Heart left ventricle (tissue), 16 donors: ENCODE measurements at regions of chr4 and their contacts with region 1.

Region 1: DNA sequence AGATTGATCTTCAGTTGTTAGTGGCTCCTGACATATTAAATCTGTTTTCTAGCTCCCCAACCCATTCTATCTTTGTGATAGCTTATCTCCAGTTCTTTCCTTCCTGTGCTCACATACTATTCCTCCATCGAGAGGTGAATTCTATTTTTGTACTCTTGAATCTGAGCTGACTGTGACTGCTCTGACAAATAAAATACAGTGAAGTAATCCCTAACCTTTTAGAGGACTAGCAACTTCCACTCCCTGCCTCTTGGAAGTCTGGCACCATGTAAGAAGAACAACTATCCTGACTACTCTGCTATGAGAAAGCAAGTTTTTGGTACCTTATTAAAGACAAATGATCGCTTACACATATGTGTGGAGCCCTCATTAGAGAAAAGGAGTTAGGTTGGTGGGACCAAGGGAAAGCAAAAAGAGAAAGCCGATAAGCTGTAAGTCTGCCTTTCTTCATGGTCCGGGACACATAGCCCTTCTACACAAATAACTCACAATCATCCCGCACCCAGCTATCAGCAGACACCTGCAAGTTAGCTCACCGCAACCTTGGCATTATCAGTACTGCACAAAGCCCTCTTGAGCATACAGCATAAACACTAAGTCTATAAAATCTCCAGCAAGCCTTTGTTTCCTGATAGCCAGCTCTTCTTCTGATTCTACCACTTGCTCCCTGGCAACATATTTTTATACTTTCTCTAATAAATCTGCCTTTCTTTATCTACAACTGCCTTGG is 13.5 kb upstream of the PPM1K start:
- DNase-seq: no peak
- ATAC-seq: peak; percentile 88 to 91 (median 88)
- H3K4me3 ChIP-seq: peak overlapping the region in 3 of 12 donors; percentile 4 to 12 (median 9)
- H3K27ac ChIP-seq: peak overlapping the region; percentile 62 to 97 (median 82)
- H3K4me1 ChIP-seq: peaks cover 0 to 35% (median 6%) of the 10 kb centered on the region in 12 donors
- H3K27me3 ChIP-seq: no peaks in the 10 kb centered on the region
- CTCF ChIP-seq: no peak
- POLR2A ChIP-seq: no peak

Region 2: DNA sequence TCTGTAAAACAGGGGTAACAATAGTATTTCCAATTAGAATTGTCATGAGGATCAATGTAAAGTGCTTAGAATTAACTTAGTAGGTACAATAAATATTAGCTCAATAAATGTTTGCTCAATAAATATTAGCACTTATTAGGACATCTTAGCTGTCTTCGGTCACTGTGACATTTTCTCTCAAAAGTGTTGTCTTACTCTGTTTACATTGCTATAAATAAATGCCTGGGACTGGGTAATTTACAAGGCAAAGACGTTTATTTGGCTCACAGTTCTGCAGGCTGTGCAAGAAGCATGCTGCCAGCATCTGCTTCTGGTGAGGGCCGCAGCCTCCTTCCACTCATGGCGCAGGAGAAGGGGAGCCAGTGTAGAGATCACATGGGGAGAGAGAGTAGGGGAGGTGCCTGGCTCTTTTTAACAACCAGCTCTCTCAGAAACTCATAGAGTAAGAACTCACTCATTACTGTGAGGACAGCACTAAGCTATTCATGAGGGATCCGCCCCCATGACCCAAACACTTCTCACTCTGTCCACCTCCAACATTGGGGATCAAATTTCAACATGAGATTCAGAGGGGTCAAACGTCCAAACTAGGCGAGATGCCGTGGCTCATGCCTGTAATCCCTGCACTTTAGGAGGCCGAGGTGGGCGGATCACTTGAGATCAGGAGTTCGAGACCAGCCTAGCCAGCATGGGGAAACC is 37.2 kb after region 1 on chr4:
- intact Hi-C with region 1: loop called in 8 of 10 experiments (anchors 5 to 10 kb)
- DNase-seq: peak in 1 of 5 donors; percentile 23
- ATAC-seq: peak in 3 of 4 donors; percentile 19 to 76 (median 53)
- H3K4me3 ChIP-seq: no peak overlapping the region
- H3K27ac ChIP-seq: no peak overlapping the region
- H3K4me1 ChIP-seq: peaks cover 0 to 8% (median 0%) of the 10 kb centered on the region in 12 donors
- H3K27me3 ChIP-seq: no peaks in the 10 kb centered on the region
- CTCF ChIP-seq: no peak
- POLR2A ChIP-seq: no peak